ENCODE measurements at regions of chr12 and their contacts with region 1.

Region 1: DNA sequence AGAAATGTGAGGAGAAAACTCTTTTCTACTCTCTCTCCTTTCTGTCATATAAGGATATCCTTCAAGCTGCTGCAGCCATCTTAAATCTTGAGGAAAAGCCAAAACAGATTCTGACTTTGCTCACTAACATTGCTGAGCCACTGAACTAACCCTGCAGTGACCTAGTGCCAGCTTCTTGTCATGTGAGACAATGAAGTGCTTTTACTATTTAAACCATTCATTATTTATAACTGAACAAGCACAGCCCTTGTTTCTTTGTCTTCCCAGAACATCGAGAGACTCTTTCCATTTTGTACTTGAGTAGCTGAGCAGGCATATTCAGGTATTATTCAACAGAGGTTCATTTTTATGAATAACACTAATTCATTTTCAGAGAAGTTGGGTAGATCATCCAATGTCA is 455.0 kb upstream of the TMPO start:
- DNase-seq: no peak
- H3K4me3 ChIP-seq: no peak overlapping the region
- H3K27ac ChIP-seq: no peak overlapping the region
- H3K4me1 ChIP-seq: no peaks in the 10 kb centered on the region
- H3K27me3 ChIP-seq: no peaks in the 10 kb centered on the region
- CTCF ChIP-seq: no peak
- POLR2A ChIP-seq: no peak

Region 2: GRCh38 chr12:98022961-98023360 is 37.5 kb before region 1 on chr12:
- intact Hi-C with region 1: no loop called
- DNase-seq: no peak
- H3K4me3 ChIP-seq: no peak overlapping the region
- H3K27ac ChIP-seq: no peak overlapping the region
- H3K4me1 ChIP-seq: no peaks in the 10 kb centered on the region
- H3K27me3 ChIP-seq: no peaks in the 10 kb centered on the region
- CTCF ChIP-seq: no peak
- POLR2A ChIP-seq: no peak

Region 3: DNA sequence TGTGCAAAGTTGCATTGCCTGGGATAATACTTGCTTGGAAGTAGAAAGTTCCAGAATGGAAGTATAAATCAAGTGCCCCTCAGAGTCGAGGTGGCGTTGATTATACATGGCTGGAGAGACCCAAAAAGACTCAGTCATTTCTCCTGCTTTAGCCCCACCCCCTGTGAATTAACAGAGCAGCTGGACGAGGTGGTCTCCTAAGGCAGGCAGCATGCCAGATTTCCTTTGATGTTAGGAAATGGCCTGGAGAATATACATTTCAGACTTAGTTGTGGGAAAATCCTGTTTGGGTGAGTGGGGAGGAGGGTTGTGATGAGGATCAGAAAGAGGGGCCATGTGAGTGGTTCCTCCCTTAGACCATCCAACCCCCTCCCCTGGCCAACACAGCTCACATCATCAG is 48.9 kb after region 1 on chr12:
- intact Hi-C with region 1: no loop called
- DNase-seq: no peak
- H3K4me3 ChIP-seq: no peak overlapping the region
- H3K27ac ChIP-seq: no peak overlapping the region
- H3K4me1 ChIP-seq: no peaks in the 10 kb centered on the region
- H3K27me3 ChIP-seq: no peaks in the 10 kb centered on the region
- CTCF ChIP-seq: no peak
- POLR2A ChIP-seq: no peak

Region 4: DNA sequence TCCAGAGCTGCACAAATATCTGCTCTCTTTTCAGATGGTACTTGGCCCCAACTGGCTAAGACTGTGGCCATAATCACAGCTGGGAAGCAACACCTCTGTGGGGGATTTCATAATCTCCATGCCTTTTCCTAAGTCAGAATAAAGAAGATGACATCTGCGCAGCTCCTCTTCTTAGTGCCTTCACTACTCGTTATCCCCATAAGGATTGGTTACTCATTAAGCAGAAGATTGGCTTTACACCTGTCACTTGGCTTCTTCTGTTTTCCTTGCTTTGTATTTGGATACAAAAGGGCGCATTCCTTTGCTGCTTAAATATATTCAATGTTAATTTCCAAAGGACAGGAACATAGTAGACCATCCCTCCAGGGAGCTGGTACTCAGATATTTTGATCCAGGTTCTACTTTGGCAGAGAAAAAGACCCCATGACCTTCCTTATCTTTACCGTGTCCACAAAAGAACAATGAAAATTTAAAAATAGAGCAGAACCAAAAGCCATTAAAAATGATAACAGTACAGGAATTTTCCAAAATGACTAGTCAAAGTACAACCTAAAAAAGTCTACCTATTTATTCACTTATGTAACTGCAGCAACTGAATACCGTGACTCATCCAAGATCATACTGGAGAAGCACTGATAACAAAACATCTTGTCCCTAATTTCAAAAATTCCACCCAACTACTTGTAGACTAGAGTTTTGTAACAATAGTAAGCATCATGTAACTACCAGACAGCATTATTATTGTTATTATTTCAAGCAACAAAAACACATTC is 102.7 kb after region 1 on chr12:
- intact Hi-C with region 1: loop called (anchors 2 kb)
- DNase-seq: no peak
- H3K4me3 ChIP-seq: no peak overlapping the region
- H3K27ac ChIP-seq: no peak overlapping the region
- H3K4me1 ChIP-seq: no peaks in the 10 kb centered on the region
- H3K27me3 ChIP-seq: no peaks in the 10 kb centered on the region
- CTCF ChIP-seq: no peak
- POLR2A ChIP-seq: no peak

Measured in breast epithelium (tissue), 4 donors.